Mammary epithelial cell (primary cell): ENCODE measurements at regions of chr2 and their contacts with region 1.

Region 1: DNA sequence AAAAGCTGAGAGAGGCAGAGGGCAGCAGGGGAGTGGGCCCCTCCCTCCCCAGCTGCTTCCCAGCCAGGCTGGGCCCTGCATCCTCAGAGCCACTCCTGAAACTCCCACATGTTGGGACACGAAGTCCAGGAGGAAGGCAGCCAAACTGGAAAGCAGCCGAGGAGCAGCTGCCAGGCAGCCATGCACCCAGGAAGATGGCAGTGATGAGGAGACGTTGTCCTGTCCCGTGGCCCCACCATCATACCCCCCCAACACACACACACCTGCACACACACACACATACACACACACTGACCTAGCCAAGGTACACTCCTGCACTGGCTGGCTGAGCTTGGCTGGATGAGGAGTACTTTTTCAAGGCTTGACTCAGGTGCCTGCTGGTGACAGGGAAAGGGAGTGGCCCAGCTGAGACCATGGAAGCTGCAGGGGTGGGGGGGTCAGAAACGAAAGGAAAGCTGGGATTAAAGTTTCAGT is 106.0 kb downstream of the CYP26B1 start:
- DNase-seq: peak; percentile 86
- H3K4me3 ChIP-seq: no peak overlapping the region
- H3K27ac ChIP-seq: peak overlapping the region; percentile 47
- H3K4me1 ChIP-seq: peaks cover 32% of the 10 kb centered on the region
- H3K27me3 ChIP-seq: no peaks in the 10 kb centered on the region
- CTCF ChIP-seq: no peak

Region 2: GRCh38 chr2:71256421-71256820 is 785.3 kb before region 1 on chr2:
- CTCF ChIA-PET with region 1: no interaction called
- dilution Hi-C with region 1: no loop called
- in situ Hi-C with region 1: no loop called
- intact Hi-C with region 1: no loop called
- DNase-seq: no peak
- H3K4me3 ChIP-seq: no peak overlapping the region
- H3K27ac ChIP-seq: no peak overlapping the region
- H3K4me1 ChIP-seq: no peaks in the 10 kb centered on the region
- H3K27me3 ChIP-seq: peaks cover 1% of the 10 kb centered on the region
- CTCF ChIP-seq: no peak

Region 3: DNA sequence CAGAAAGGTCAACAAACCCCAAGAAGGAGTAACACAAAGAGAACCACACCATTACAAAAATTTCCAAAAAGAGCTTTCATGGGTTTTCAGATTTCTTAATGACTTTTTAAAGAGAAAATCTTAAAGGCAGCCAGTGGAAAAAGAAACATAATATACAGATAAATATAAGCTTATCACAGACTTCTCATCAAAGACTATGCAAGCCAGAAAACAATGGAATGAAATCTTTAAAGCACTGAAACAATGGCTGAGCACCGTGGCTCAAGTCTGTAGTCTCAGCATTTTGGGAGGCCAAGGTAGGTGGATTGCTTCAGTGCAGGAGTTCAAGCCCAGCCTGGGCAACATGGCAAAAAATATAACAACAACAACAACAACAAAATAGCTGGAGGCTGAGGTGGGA is 131.4 kb before region 1 on chr2:
- CTCF ChIA-PET with region 1: no interaction called
- dilution Hi-C with region 1: no loop called
- in situ Hi-C with region 1: no loop called
- intact Hi-C with region 1: no loop called
- DNase-seq: no peak
- H3K4me3 ChIP-seq: no peak overlapping the region
- H3K27ac ChIP-seq: no peak overlapping the region
- H3K4me1 ChIP-seq: no peaks in the 10 kb centered on the region
- H3K27me3 ChIP-seq: peaks cover 2% of the 10 kb centered on the region
- CTCF ChIP-seq: no peak

Region 4: GRCh38 chr2:71951718-71952404 is 89.8 kb before region 1 on chr2:
- CTCF ChIA-PET with region 1: interaction called, 22 read pairs
- dilution Hi-C with region 1: no loop called
- in situ Hi-C with region 1: no loop called
- intact Hi-C with region 1: no loop called
- DNase-seq: peak; percentile 9
- H3K4me3 ChIP-seq: no peak overlapping the region
- H3K27ac ChIP-seq: no peak overlapping the region
- H3K4me1 ChIP-seq: peaks cover 23% of the 10 kb centered on the region
- H3K27me3 ChIP-seq: no peaks in the 10 kb centered on the region
- CTCF ChIP-seq: no peak

Region 5: GRCh38 chr2:72115552-72116546 is 74.2 kb after region 1 on chr2:
- CTCF ChIA-PET with region 1: no interaction called
- dilution Hi-C with region 1: loop called (anchors 5 kb)
- in situ Hi-C with region 1: no loop called
- intact Hi-C with region 1: loop called (anchors 2 kb)
- DNase-seq: peak; percentile 98
- H3K4me3 ChIP-seq: no peak overlapping the region
- H3K27ac ChIP-seq: peak overlapping the region; percentile 48
- H3K4me1 ChIP-seq: peaks cover 34% of the 10 kb centered on the region
- H3K27me3 ChIP-seq: no peaks in the 10 kb centered on the region
- CTCF ChIP-seq: peak; percentile 39 to 46